ENCODE measurements at regions of chr2 and their contacts with region 1.

Region 1: GRCh38 chr2:37168217-37168981 is 11.6 kb upstream of the EIF2AK2 start:
- DNase-seq: no peak
- H3K4me3 ChIP-seq: no peak overlapping the region
- CTCF ChIP-seq: peak; percentile 61

Region 2: DNA sequence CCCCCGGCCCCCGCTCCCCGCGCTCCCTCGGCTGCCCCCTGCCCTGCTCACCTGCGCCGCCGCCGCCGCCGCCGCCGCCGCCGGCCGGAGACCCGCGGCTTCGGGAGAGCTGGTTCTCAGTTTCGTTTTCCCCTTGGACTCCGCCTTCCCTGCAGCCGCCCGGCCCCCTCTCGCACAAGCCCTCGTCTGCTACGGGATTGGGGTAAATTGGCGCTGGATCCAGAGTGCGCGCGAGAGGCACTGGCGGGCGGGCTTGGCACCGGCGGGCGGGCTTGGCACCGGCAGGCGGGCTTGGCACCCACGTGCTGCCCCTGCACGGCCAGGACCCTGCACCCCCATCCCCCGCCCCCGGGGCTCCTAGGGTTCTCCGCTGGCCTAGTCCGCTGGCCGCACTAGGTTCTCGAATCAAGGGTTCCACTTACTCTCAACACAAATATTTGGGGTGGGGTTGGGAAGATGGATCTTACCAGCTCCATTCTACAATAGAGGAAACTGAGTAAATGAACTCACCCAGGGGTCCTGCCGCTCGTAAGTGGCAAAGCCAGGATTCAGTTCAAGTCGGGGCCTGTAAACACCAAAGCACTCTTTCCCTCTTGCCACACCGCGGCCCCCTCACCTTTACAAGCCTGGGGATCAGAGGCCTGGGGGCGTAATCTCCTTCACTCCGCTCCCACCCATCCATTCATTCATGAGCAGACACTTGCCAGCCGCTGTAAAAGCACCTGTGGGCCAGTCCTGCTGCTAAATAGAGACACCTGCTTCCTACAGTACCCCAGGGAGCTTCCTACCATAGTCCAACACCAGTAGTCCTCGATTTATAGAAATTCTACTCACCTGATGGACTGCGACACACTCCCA is 11.3 kb before region 1 on chr2 and contains the start of gene EIF2AK2:
- CTCF ChIA-PET with region 1: interaction called, 48 read pairs
- POLR2A ChIA-PET with region 1: no interaction called
- DNase-seq: no peak
- H3K4me3 ChIP-seq: peak within 1 kb of the TSS; percentile 78
- CTCF ChIP-seq: no peak

Region 3: GRCh38 chr2:37180006-37180639 is 11.7 kb after region 1 on chr2:
- CTCF ChIA-PET with region 1: interaction called, 54 read pairs
- POLR2A ChIA-PET with region 1: no interaction called
- DNase-seq: no peak
- H3K4me3 ChIP-seq: no peak overlapping the region
- CTCF ChIP-seq: no peak

Region 4: GRCh38 chr2:37189452-37190153 is 21.2 kb after region 1 on chr2:
- CTCF ChIA-PET with region 1: interaction called, 15 read pairs
- POLR2A ChIA-PET with region 1: interaction called, 3 read pairs
- DNase-seq: peak; percentile 75
- H3K4me3 ChIP-seq: no peak overlapping the region
- CTCF ChIP-seq: no peak

Region 5: DNA sequence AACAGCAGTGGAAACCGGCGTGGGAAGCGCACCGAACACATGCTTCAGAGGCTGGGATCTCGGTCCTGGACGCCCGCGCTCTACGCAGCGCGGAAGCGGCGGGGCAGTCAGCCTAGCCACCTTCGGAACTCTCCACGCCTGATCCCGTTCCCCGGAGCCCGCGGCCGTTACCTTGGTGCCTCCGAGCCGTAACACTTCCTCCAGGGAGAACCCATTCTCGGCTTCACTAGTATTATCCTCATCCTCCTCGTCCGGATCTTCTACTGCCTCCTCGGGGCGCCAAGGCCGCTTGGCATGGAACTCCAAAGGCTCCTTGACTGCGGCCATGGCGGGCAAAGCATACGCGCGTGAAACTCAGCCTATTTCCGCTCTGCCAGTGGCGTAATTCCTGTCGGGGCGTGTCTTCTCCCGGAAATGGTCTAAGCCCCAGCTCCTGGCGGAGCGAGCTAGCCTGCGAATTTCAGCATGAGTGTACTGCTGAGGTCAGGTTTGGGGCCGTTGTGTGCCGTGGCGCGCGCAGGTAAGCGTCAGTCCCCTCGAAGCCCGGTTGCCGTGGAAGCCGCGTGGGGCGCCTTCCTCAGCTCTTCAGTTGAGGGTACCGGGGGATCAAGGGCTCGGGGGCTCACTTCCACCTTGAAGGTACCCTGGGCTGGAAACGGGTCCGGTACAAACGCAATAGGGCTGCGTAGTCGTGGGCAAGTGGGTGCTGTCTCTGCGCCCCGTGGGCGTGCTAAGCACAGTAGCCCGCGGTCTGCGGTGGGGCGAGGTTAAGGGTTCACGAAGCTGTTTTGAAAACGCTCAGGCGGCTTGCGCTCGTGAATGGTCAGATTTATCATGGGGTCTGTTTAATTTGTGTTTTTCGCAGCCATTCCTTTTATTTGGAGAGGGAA is 63.1 kb after region 1 on chr2 and contains the starts of genes CEBPZ and NDUFAF7:
- CTCF ChIA-PET with region 1: interaction called, 20 read pairs
- POLR2A ChIA-PET with region 1: no interaction called
- DNase-seq: peak; percentile 63
- H3K4me3 ChIP-seq: peak within 1 kb of the TSS; percentile 93
- CTCF ChIP-seq: no peak

Measured in AG04449 (cell line).